ENCODE measurements at regions of chr12 and their contacts with region 1.

Region 1: GRCh38 chr12:123854918-123855317 is 92.8 kb downstream of the DNAH10 start:
- DNase-seq: no peak
- ATAC-seq: no peak
- H3K4me3 ChIP-seq: no peak overlapping the region
- H3K4me3 Mint-ChIP-seq: no peak overlapping the region
- H3K27ac ChIP-seq: no peak overlapping the region
- H3K27ac Mint-ChIP-seq: no peak overlapping the region
- H3K4me1 ChIP-seq: no peaks in the 10 kb centered on the region
- H3K4me1 Mint-ChIP-seq: no peaks in the 10 kb centered on the region
- H3K27me3 ChIP-seq: no peaks in the 10 kb centered on the region
- H3K27me3 Mint-ChIP-seq: no peaks in the 10 kb centered on the region
- CTCF ChIP-seq: no peak

Region 2: GRCh38 chr12:123106628-123107359 is 748.1 kb before region 1 on chr12:
- CTCF ChIA-PET with region 1: no interaction called
- POLR2A ChIA-PET with region 1: no interaction called
- intact Hi-C with region 1: no loop called
- DNase-seq: peak in 8 of 9 experiments; percentile 48 to 81 (median 60)
- ATAC-seq: peak; percentile 86
- H3K4me3 ChIP-seq: peak overlapping the region; percentile 0 to 26
- H3K4me3 Mint-ChIP-seq: peak overlapping the region; percentile 66
- H3K27ac ChIP-seq: peak overlapping the region; percentile 52 to 82
- H3K27ac Mint-ChIP-seq: peak overlapping the region; percentile 98
- H3K4me1 ChIP-seq: peaks cover 53% of the 10 kb centered on the region
- H3K4me1 Mint-ChIP-seq: peaks cover 72% of the 10 kb centered on the region
- H3K27me3 ChIP-seq: no peaks in the 10 kb centered on the region
- H3K27me3 Mint-ChIP-seq: no peaks in the 10 kb centered on the region
- CTCF ChIP-seq: no peak

Region 3: GRCh38 chr12:123822804-123823203 is 32.1 kb before region 1 on chr12:
- CTCF ChIA-PET with region 1: no interaction called
- POLR2A ChIA-PET with region 1: no interaction called
- intact Hi-C with region 1: loop called in 1 of 2 experiments (anchors 1 kb)
- DNase-seq: no peak
- ATAC-seq: no peak
- H3K4me3 ChIP-seq: no peak overlapping the region
- H3K4me3 Mint-ChIP-seq: no peak overlapping the region
- H3K27ac ChIP-seq: no peak overlapping the region
- H3K27ac Mint-ChIP-seq: no peak overlapping the region
- H3K4me1 ChIP-seq: no peaks in the 10 kb centered on the region
- H3K4me1 Mint-ChIP-seq: no peaks in the 10 kb centered on the region
- H3K27me3 ChIP-seq: no peaks in the 10 kb centered on the region
- H3K27me3 Mint-ChIP-seq: peaks cover 8% of the 10 kb centered on the region
- CTCF ChIP-seq: no peak

Measured in CD8-positive, alpha-beta T cell (primary cell).